CD4-positive, alpha-beta T cell (primary cell): ENCODE measurements at regions of chr1 and their contacts with region 1.

Region 1: DNA sequence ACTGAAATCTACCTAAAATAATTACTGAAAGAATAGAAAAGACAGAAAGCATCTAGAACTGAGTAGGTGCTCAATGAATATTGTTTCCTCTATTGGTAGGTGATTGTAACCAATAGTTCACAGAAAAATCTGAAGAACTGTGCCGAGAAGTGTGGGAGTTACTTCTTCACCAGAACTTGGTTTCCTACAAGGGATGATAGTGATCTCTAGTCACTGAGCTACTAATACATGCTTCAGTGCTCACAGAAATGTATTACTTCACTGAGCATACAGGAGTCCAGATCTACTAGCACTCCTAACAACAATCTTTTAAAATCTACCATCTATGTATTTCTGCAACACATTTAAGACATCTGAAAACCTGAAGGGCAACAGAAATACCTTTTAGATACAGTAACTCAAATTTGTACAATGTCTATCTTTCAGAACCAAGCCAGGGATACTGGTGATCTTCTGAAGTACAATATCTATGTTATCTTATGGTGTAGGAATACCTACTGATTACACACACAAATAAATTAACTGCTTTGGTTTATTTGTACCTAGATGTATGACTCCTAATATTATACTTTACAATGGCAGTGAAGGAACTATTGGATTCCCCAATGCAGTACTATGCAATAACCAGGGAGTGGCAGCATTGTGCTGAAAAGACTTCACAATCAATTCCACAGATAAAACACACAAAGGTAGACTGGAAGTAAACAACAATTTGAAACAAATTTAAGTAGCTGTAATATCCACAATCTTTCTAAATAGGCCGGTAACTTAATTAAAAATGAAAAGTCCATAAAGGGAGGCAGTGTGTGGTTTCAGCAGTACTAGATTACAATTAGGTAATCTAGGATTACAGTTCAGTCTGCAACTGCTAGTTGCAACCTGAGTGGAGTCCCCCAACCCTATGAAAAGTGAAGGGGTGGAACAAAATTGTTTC is 243.0 kb downstream of the SLC45A1 start:
- DNase-seq: peak in 7 of 14 experiments; percentile 9 to 77 (median 45)
- ATAC-seq: peak; percentile 94
- H3K4me3 ChIP-seq: no peak overlapping the region
- H3K4me3 Mint-ChIP-seq: no peak overlapping the region
- H3K27ac ChIP-seq: no peak overlapping the region
- H3K27ac Mint-ChIP-seq: no peak overlapping the region
- H3K4me1 ChIP-seq: no peaks in the 10 kb centered on the region
- H3K4me1 Mint-ChIP-seq: peaks cover 5% of the 10 kb centered on the region
- H3K27me3 ChIP-seq: no peaks in the 10 kb centered on the region
- H3K27me3 Mint-ChIP-seq: no peaks in the 10 kb centered on the region
- CTCF ChIP-seq: peak; percentile 95

Region 2: DNA sequence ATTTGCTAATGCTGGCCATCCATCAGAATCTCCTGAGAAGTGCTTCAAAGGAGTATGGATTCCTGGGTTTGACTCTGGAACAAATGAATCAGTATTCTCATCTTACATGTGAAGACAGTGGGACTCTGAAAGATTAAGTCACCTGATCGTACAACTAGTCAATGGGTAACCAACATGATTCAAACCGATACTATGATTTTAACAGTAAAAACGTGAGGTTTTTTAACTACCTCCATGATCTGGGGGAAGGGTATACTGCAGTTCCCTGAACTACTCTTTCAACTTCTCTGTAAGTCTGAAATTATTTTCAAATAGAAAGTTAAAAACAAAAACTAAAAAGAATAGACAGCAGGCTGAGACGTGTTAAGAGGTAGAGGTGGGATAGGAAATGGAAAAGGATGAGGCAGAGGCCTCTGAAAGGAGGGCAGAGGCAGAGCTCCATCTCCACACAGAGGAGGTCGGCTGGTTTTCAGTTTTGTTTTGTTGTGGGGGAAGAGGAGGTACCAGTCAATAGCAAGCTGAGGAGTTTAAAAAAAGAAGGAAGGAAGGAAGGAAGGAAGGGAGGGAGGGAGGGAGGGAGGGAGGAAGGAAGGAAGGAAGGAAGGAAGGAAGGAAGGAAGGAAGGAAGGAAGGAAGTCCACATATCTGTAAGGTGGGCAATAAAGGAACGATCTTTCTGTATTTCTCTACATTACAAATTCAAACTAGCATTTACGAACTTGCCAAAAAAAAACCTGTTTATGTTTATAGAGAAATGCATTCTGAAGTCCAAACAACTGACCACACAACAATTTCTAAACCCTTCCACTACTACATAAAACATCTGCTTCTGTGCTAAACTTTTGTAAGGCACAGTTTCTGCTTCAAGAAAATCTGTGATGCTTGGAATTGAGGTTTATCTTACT is 43.4 kb after region 1 on chr1:
- CTCF ChIA-PET with region 1: no interaction called
- POLR2A ChIA-PET with region 1: no interaction called
- intact Hi-C with region 1: no loop called
- DNase-seq: peak in 3 of 14 experiments; percentile 13 to 42 (median 22)
- ATAC-seq: peak; percentile 48
- H3K4me3 ChIP-seq: no peak overlapping the region
- H3K4me3 Mint-ChIP-seq: peak overlapping the region; percentile 54
- H3K27ac ChIP-seq: peak overlapping the region in 1 of 2 donors; percentile 12
- H3K27ac Mint-ChIP-seq: peak overlapping the region; percentile 70
- H3K4me1 ChIP-seq: peaks cover 23% of the 10 kb centered on the region
- H3K4me1 Mint-ChIP-seq: peaks cover 29% of the 10 kb centered on the region
- H3K27me3 ChIP-seq: no peaks in the 10 kb centered on the region
- H3K27me3 Mint-ChIP-seq: no peaks in the 10 kb centered on the region
- CTCF ChIP-seq: no peak

Region 3: GRCh38 chr1:8671306-8671917 is 110.5 kb after region 1 on chr1:
- CTCF ChIA-PET with region 1: interaction called, 15 read pairs
- POLR2A ChIA-PET with region 1: no interaction called
- intact Hi-C with region 1: loop called (anchors 1 kb)
- DNase-seq: peak in 4 of 14 experiments; percentile 31 to 69 (median 56)
- ATAC-seq: no peak
- H3K4me3 ChIP-seq: no peak overlapping the region
- H3K4me3 Mint-ChIP-seq: no peak overlapping the region
- H3K27ac ChIP-seq: no peak overlapping the region
- H3K27ac Mint-ChIP-seq: no peak overlapping the region
- H3K4me1 ChIP-seq: peaks cover under 1% of the 10 kb centered on the region
- H3K4me1 Mint-ChIP-seq: peaks cover 29% of the 10 kb centered on the region
- H3K27me3 ChIP-seq: no peaks in the 10 kb centered on the region
- H3K27me3 Mint-ChIP-seq: no peaks in the 10 kb centered on the region
- CTCF ChIP-seq: peak; percentile 70

Region 4: GRCh38 chr1:8712413-8713231 is 151.7 kb after region 1 on chr1:
- CTCF ChIA-PET with region 1: no interaction called
- POLR2A ChIA-PET with region 1: no interaction called
- intact Hi-C with region 1: no loop called
- DNase-seq: peak in 3 of 14 experiments; percentile 25 to 55 (median 33)
- ATAC-seq: peak; percentile 49
- H3K4me3 ChIP-seq: no peak overlapping the region
- H3K4me3 Mint-ChIP-seq: peak overlapping the region; percentile 49
- H3K27ac ChIP-seq: no peak overlapping the region
- H3K27ac Mint-ChIP-seq: peak overlapping the region; percentile 7
- H3K4me1 ChIP-seq: peaks cover 3% of the 10 kb centered on the region
- H3K4me1 Mint-ChIP-seq: peaks cover 18% of the 10 kb centered on the region
- H3K27me3 ChIP-seq: no peaks in the 10 kb centered on the region
- H3K27me3 Mint-ChIP-seq: peaks cover 5% of the 10 kb centered on the region
- CTCF ChIP-seq: no peak

Region 5: DNA sequence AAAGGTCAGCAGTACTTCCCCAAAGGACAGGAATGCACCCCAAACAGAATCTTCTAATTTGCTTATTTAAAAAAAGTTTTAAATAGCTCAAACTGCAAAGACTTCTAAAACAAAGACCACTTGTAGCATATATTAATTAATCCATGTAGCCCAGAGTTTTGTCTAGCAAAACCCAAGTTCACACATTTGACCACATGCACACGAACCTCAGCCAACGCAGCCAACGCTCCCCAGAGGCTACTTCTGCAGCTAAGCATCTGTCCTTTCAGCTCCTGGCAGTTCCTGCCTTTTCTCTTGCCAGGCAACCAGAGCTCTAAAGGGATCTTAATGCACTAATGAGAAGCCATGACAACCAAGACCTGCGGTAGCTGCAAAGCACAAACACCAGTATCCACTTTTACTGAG is 166.9 kb after region 1 on chr1:
- CTCF ChIA-PET with region 1: interaction called, 35 read pairs
- POLR2A ChIA-PET with region 1: interaction called, 5 read pairs
- intact Hi-C with region 1: loop called (anchors 1 kb)
- DNase-seq: no peak
- ATAC-seq: no peak
- H3K4me3 ChIP-seq: no peak overlapping the region
- H3K4me3 Mint-ChIP-seq: no peak overlapping the region
- H3K27ac ChIP-seq: no peak overlapping the region
- H3K27ac Mint-ChIP-seq: no peak overlapping the region
- H3K4me1 ChIP-seq: no peaks in the 10 kb centered on the region
- H3K4me1 Mint-ChIP-seq: peaks cover 19% of the 10 kb centered on the region
- H3K27me3 ChIP-seq: no peaks in the 10 kb centered on the region
- H3K27me3 Mint-ChIP-seq: no peaks in the 10 kb centered on the region
- CTCF ChIP-seq: no peak